ENCODE measurements at regions of chr6 and their contacts with region 1.

Region 1: DNA sequence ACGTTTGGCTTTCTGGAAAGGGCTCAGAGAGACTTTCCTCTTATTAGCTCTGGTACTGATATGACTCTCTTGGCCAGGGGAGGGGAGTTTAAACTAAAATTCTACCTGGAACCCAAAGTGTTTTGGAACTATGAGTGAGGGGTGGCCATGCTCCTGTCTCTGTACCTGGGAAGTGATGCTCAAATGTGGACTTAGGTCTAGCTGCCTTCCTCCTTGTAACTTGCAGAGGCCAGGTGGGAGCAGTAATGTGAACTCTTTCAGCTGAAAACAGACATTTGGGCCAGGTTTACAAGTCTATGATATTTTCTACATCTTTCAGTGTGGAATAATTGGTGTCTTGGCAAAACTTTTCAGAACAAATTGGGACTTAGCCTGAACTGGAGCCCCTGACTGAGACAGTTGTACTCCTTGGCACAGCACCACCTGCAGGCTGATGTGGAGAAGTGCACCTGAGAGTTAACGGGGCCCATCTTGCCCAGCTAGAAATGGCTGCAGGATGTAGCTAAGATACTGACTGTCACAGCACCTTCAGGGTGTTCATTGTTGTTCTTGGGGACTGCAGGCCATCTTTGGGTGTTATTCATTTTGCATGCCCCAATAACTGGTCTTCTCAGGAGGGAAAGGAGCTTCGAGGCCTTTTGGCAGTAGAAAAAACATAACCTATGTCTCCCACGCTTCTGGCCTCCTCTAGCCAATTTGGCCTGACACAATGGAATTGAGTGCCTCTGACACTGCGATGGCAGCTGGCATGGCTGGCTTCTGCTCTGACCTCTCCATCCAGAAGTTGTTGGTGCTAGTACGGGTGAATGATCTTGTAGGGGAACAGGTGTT is 37.1 kb downstream of the CD109 start:
- DNase-seq: peak; percentile 25 to 66
- ATAC-seq: peak; percentile 96 to 97
- H3K4me3 ChIP-seq: no peak overlapping the region
- H3K27ac ChIP-seq: peak overlapping the region in 1 of 2 experiments; percentile 44; a peak in 1 of 6 replicates
- H3K4me1 ChIP-seq: peaks cover 4% of the 10 kb centered on the region; the same call in 1 of the 3 replicates
- CTCF ChIP-seq: peak; percentile 71
- EP300 ChIP-seq: no peak
- POLR2A ChIP-seq: no peak
- RAD21 ChIP-seq: peak; percentile 76 to 79

Region 2: DNA sequence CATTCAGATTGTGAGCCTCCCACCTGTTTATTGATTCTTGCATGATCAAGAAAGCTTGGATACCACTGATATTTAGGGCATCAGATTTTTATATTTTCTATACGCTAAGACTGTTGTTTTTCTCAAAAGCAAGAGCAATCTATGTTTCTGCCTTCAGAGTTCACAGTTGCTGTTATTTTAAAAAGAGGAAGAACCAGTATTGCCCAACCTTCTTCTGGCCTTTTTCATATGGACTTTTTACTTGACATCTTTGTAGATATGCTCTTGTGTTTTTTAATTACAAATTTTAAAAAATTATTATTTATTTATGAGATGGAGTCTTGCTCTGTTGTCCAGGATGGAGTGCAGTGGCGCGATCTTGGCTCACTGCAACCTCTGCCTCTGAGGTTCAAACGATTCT is 108.2 kb before region 1 on chr6:
- CTCF ChIA-PET with region 1: no interaction called
- POLR2A ChIA-PET with region 1: no interaction called
- DNase-seq: no peak
- ATAC-seq: no peak
- H3K4me3 ChIP-seq: no peak overlapping the region
- H3K27ac ChIP-seq: no peak overlapping the region
- H3K4me1 ChIP-seq: no peaks in the 10 kb centered on the region
- CTCF ChIP-seq: no peak
- EP300 ChIP-seq: no peak
- POLR2A ChIP-seq: no peak
- RAD21 ChIP-seq: no peak

Region 3: GRCh38 chr6:73665686-73666319 is 67.3 kb before region 1 on chr6:
- CTCF ChIA-PET with region 1: interaction called, 10 read pairs
- POLR2A ChIA-PET with region 1: no interaction called
- DNase-seq: no peak
- ATAC-seq: peak; percentile 54 to 56; a peak in 4 of 6 replicates
- H3K4me3 ChIP-seq: no peak overlapping the region
- H3K27ac ChIP-seq: no peak overlapping the region
- H3K4me1 ChIP-seq: peaks cover 9% of the 10 kb centered on the region; the same call in 1 of the 3 replicates
- CTCF ChIP-seq: no peak
- EP300 ChIP-seq: no peak
- POLR2A ChIP-seq: no peak
- RAD21 ChIP-seq: no peak

Region 4: GRCh38 chr6:73688351-73688750 is 44.7 kb before region 1 on chr6:
- CTCF ChIA-PET with region 1: interaction called, 22 read pairs
- POLR2A ChIA-PET with region 1: no interaction called
- DNase-seq: no peak
- ATAC-seq: no peak
- H3K4me3 ChIP-seq: no peak overlapping the region
- H3K27ac ChIP-seq: no peak overlapping the region
- H3K4me1 ChIP-seq: peaks cover 8% of the 10 kb centered on the region; the same call in 2 of the 3 replicates
- CTCF ChIP-seq: no peak
- EP300 ChIP-seq: no peak
- POLR2A ChIP-seq: no peak
- RAD21 ChIP-seq: no peak

Region 5: GRCh38 chr6:73702444-73702843 is 30.6 kb before region 1 on chr6:
- CTCF ChIA-PET with region 1: interaction called, 12 read pairs
- POLR2A ChIA-PET with region 1: no interaction called
- DNase-seq: no peak
- ATAC-seq: no peak
- H3K4me3 ChIP-seq: no peak overlapping the region
- H3K27ac ChIP-seq: peak overlapping the region; percentile 4 to 90; a peak in 2 of 6 replicates
- H3K4me1 ChIP-seq: peaks cover 39% of the 10 kb centered on the region
- CTCF ChIP-seq: no peak
- EP300 ChIP-seq: no peak
- POLR2A ChIP-seq: no peak
- RAD21 ChIP-seq: no peak

Measured in A549 (cell line).